Right ventricle myocardium inferior (tissue), 1 donor: ENCODE measurements at regions of chr7 and their contacts with region 1.

Region 1: DNA sequence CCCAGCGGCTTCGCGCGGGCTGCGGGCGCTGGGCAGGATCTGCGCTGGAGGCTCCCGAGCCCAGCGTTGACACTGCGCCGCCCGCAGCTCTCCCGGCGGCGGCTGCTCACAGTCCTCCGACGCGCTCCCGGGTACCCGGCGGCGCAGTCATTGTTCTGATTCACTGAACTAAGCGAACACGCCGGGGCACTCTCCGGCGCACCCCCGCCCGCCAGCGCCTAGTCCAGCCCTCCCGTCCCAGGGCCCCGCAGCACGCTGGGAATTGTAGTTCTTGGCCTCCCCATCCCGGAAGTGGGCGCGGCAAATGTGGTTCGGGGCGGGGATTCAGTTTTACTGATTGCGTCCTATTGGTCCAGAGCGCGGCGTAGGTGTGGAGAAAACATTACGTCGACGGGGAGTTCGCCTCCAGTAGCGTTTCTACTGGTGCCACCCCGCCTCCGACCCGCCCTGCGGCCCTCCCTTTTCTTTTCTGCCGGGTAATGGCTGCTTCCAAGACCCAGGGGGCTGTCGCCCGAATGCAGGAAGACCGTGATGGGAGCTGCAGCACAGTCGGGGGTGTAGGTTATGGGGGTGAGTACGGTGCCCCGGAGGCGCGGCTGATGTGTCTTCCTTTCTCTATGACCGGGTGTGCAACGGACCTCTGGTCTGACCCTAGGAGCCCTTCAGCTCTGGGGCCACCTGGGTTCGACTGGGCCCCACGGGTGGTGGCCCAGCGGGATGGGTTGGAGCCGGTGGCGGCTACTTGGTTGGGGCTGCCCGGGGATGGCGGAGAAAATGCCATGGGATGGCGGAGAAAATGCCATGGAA is at the starts of genes DOCK4 and ZNF277:
- DNase-seq: peak; percentile 100
- ATAC-seq: peak; percentile 97
- total RNA-seq, gene DOCK4: 16.8 TPM
- total RNA-seq, gene ZNF277: 15.7 TPM

Region 2: GRCh38 chr7:111958896-111959295 is 247.5 kb before region 1 on chr7:
- intact Hi-C with region 1: loop called (anchors 5 kb)
- DNase-seq: no peak
- ATAC-seq: no peak

Region 3: GRCh38 chr7:112129655-112130323 is 76.7 kb before region 1 on chr7:
- intact Hi-C with region 1: loop called (anchors 5 kb)
- DNase-seq: no peak
- ATAC-seq: peak; percentile 19

Region 4: GRCh38 chr7:112220877-112221434 is 14.5 kb after region 1 on chr7:
- intact Hi-C with region 1: no loop called
- DNase-seq: no peak
- ATAC-seq: no peak

Region 5: GRCh38 chr7:112233048-112233698 is 26.7 kb after region 1 on chr7:
- intact Hi-C with region 1: loop called (anchors 2 kb)
- DNase-seq: no peak
- ATAC-seq: peak; percentile 85

Region 6: DNA sequence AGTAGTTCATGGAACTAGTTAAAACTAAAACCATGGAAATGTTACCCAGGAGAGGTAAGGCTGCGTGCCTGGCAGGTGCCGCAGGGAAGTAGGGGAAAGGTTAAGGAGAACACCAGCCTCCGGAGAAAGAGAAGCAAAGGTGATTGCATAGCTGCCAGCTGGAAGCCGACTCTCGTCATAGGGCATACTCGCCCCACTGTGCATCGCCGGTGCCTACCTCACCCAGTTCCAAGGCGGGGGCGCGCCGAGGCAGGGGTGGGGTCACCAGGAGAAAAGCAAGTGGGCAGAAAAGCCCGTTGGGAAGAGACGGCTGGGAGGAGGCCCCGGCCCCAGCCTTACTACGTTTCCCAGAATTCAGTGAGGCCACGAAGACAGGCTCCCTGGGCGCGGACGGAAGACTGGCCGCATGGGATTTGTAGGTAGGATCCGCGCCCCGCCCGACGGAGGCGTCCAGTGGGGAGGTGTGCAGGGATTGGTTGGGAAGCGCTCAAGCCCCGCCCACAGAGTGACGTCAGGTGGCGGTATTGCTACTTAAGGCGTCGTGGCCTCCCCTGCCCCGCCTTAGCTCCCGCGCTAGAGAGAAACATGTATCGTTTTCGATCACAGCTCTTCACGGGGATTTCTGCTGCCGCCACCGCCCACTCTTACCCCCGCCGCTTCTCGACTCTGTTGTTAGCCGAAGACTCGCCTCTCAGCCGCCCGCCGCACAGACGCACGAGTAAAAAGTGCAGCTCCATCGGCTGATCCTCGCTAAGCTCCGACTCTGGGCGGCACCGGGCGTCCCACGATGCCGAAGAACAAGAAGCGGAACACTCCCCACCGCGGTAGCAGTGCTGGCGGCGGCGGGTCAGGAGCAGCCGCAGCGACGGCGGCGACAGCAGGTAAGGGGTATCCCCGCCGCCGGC is 243.7 kb after region 1 on chr7 and contains the start of gene IFRD1:
- intact Hi-C with region 1: loop called (anchors 5 kb)
- DNase-seq: peak; percentile 100
- ATAC-seq: peak; percentile 96
- total RNA-seq, gene IFRD1: 17.8 TPM